ENCODE measurements at regions of chr2 and their contacts with region 1.

Region 1: DNA sequence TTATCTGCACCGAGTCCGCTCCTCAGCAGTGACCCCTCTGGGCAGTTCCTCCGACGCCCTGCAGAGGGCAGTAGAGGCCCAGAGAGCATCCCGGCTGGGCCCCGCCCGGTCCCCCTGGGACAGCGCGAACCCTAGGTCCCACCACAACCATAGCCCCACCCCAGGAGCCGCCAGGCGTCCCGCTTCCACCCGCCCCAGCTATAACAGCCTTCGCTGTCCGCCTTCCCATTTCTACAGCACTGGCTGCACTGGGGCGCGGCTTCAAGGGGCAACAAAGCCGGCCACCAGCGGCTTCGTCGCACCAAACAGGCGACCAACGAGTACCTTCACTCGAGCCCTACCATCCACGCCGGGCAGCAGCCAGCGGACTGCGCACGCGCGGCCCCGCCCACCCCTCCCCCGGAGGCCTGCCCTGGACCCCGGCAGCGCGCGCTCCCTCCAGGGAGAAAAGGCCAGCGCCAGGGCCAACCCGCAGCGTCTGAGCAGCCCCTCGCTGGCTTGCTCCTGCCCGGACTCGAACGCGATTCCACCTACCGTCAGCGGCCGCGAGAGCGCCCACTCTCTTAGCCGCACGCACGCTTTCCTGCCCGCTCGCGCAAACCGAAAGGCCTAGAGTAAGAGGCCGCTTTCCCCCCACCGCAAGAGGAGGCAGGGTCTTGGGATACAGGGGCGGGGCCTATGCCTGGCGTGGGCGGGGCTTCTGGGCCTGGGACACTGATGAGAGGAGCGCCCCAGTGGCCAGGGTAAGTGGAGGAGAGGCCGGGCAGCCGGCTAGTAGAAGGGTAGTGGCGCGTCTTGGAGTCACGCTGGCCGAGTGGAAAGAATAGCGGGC is at the start of gene NHEJ1:
- DNase-seq: peak; percentile 90 to 97 (median 93)
- H3K4me3 ChIP-seq: peak within 1 kb of the TSS in 1 of 2 donors; percentile 70
- H3K4me3 Mint-ChIP-seq: peak within 1 kb of the TSS; percentile 89 to 98 (median 94)
- H3K27ac ChIP-seq: peak within 1 kb of the TSS; percentile 71
- H3K27ac Mint-ChIP-seq: peak within 1 kb of the TSS; percentile 88 to 99 (median 95)
- H3K4me1 ChIP-seq: peaks cover 12% of the 10 kb centered on the region
- H3K4me1 Mint-ChIP-seq: peaks cover 14 to 21% (median 18%) of the 10 kb centered on the region in 4 donors
- H3K27me3 ChIP-seq: no peaks in the 10 kb centered on the region
- H3K27me3 Mint-ChIP-seq: no peaks in the 10 kb centered on the region
- total RNA-seq, gene NHEJ1: 14.1 to 15.5 TPM

Region 2: DNA sequence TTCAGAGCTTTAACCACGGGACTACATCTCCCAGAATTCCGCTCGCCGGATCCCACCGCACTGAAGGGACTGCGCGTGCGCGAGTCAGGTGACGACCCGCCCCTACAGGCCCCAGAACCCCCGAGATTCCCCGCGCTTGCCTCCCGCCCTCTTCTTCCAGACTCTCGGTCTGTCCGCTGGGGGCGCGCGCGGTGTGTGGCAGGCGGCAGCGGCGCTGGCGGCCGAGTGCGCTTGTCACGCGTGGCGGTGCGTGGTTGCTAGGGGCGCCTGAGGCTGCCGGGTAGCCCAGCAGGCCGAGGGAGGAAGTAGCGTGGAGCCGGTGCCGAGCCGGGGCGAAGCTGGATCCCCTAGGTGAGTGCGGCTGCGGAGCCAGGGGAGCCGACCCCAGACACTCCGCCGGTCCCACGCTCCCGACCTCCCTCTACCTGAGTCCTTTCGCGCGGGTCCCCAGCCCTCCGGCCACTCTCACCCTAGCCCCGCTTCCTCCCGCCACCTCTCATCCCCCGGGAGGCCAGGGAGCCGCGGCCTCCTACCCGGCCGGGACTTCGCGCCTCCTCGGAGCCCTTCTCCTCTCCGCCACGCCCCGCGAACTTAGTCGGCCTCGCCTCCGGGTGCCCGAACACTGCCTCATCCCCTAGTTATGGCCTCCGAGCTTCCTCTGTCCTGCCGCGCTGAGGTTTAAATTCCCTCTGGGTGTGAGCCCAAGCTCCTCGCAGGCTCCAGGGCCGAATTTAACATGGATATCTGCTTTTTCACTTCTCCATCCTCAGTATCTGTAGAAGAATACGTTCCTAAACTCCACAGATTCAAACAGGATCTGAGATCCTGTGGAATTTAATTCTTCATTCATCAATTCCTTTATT is 449.5 kb before region 1 on chr2 and contains the start of gene TTLL4:
- CTCF ChIA-PET with region 1: no interaction called
- POLR2A ChIA-PET with region 1: no interaction called
- intact Hi-C with region 1: loop called (anchors 5 kb)
- DNase-seq: peak; percentile 98 to 99 (median 99)
- H3K4me3 ChIP-seq: peak within 1 kb of the TSS; percentile 55 to 78
- H3K4me3 Mint-ChIP-seq: peak within 1 kb of the TSS; percentile 88 to 98 (median 95)
- H3K27ac ChIP-seq: peak within 1 kb of the TSS; percentile 81
- H3K27ac Mint-ChIP-seq: peak within 1 kb of the TSS; percentile 79 to 96 (median 93)
- H3K4me1 ChIP-seq: peaks cover 16% of the 10 kb centered on the region
- H3K4me1 Mint-ChIP-seq: peaks cover 14 to 26% (median 18%) of the 10 kb centered on the region in 4 donors
- H3K27me3 ChIP-seq: no peaks in the 10 kb centered on the region
- H3K27me3 Mint-ChIP-seq: peaks cover 0 to under 1% of the 10 kb centered on the region in 2 donors
- total RNA-seq, gene TTLL4: 23.1 to 26.1 TPM

Region 3: DNA sequence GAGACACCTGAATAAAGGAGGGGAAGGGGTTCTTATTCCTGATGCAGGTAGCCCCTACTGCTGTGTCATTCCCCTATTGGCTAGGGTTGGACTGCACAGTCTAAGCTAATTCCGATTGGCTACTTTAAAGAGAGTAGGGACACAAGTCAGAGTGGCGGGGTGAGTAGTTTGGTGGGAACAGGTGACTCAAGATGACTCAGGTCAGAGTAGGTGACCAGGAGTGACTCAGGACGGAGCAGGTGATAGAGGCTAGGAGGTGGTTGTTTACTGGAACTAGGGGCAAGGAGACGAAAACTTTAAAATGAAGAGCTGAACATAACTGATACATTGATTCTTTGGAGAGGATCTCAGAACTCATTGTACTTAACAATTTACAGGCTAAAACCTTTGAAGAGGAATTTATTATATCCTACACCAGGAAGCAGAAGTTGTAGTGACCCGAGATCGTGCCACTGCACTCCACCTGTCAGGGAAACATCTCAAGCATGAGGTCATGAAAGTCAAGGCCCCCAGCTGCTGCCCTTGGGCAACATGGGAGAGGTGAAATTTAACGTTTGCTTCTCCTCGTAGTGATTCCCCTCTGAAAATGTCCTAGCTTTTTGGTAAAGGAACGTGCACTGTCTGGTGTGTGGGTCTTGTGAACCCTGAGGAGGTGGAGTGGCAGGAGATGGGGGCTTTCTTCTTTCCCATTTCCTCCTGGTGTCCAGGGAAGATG is 383.0 kb before region 1 on chr2:
- CTCF ChIA-PET with region 1: no interaction called
- POLR2A ChIA-PET with region 1: no interaction called
- intact Hi-C with region 1: no loop called
- DNase-seq: no peak
- H3K4me3 ChIP-seq: no peak overlapping the region
- H3K4me3 Mint-ChIP-seq: no peak overlapping the region
- H3K27ac ChIP-seq: no peak overlapping the region
- H3K27ac Mint-ChIP-seq: no peak overlapping the region
- H3K4me1 ChIP-seq: peaks cover 5% of the 10 kb centered on the region
- H3K4me1 Mint-ChIP-seq: peaks cover 2 to 8% (median 6%) of the 10 kb centered on the region in 4 donors
- H3K27me3 ChIP-seq: peaks cover 17% of the 10 kb centered on the region
- H3K27me3 Mint-ChIP-seq: peaks cover 21 to 22% of the 10 kb centered on the region in 2 donors

Region 4: DNA sequence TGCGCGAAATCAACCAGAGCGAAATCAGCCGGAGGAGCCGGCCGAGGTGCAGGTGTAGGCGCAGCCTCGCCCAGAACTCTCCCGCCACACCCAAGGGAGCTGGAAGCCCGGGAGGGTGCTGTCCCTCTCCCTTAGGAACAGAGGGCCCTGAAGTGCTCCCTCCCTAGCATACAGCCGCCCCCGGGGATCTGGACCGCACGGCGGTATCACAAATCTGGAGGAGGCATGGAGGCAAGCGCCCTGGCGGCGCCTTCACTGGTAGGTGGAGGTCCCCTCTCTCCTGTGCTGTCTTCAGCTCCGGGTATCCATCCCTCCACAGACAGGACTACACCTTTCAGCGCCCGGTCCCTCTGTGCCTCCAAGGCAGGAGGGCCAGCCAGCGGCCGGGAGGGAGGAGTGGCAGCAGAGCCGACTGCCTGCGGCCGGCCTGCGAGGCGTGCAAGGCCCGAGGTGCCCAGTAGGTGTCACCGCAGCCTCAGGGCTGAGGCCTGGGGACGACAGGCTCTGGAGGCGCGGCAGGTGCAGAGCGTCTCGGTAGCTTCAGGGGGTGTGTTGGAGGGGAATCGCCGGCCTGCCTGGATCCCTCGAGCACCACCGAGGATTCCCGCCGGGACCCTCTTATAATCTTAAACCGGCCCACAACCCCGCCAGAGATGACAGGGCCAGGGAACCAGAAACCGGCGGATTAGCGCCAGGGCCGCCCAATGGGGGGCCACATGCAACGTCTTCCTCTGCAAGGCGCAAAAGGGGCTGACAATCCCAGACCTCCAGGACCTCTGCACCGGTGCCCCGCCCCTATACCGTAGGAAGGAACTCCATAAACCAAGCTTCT is 102.5 kb before region 1 on chr2:
- CTCF ChIA-PET with region 1: interaction called, 125 read pairs
- POLR2A ChIA-PET with region 1: interaction called, 3 read pairs
- intact Hi-C with region 1: loop called (anchors 1 kb)
- DNase-seq: peak; percentile 68 to 75 (median 70)
- H3K4me3 ChIP-seq: peak overlapping the region in 1 of 2 donors; percentile 24
- H3K4me3 Mint-ChIP-seq: peak overlapping the region in 7 of 8 donors; percentile 20 to 74 (median 65)
- H3K27ac ChIP-seq: no peak overlapping the region
- H3K27ac Mint-ChIP-seq: peak overlapping the region in 1 of 7 donors; percentile 30
- H3K4me1 ChIP-seq: peaks cover 35% of the 10 kb centered on the region
- H3K4me1 Mint-ChIP-seq: peaks cover 6 to 40% (median 20%) of the 10 kb centered on the region in 4 donors
- H3K27me3 ChIP-seq: peaks cover 40% of the 10 kb centered on the region
- H3K27me3 Mint-ChIP-seq: peaks cover 33 to 45% of the 10 kb centered on the region in 2 donors

Region 5: GRCh38 chr2:219206442-219207253 is 46.2 kb after region 1 on chr2 and contains the start of gene ZFAND2B:
- CTCF ChIA-PET with region 1: interaction called, 186 read pairs
- POLR2A ChIA-PET with region 1: interaction called, 26 read pairs
- intact Hi-C with region 1: loop called (anchors 1 kb)
- DNase-seq: peak; percentile 93 to 98 (median 95)
- H3K4me3 ChIP-seq: peak within 1 kb of the TSS; percentile 67 to 88
- H3K4me3 Mint-ChIP-seq: peak within 1 kb of the TSS; percentile 88 to 95 (median 94)
- H3K27ac ChIP-seq: peak within 1 kb of the TSS; percentile 87
- H3K27ac Mint-ChIP-seq: peak within 1 kb of the TSS; percentile 93 to 98 (median 97)
- H3K4me1 ChIP-seq: peaks cover 39% of the 10 kb centered on the region
- H3K4me1 Mint-ChIP-seq: peaks cover 22 to 54% (median 37%) of the 10 kb centered on the region in 4 donors
- H3K27me3 ChIP-seq: no peaks in the 10 kb centered on the region
- H3K27me3 Mint-ChIP-seq: no peaks in the 10 kb centered on the region
- total RNA-seq, gene ZFAND2B: 73.3 to 79.8 TPM

Region 6: GRCh38 chr2:219245148-219245898 is 84.9 kb after region 1 on chr2 and contains the starts of genes GLB1L and STK16:
- CTCF ChIA-PET with region 1: interaction called, 11 read pairs
- POLR2A ChIA-PET with region 1: interaction called, 3 read pairs
- intact Hi-C with region 1: no loop called
- DNase-seq: peak; percentile 85 to 88 (median 86)
- H3K4me3 ChIP-seq: peak within 1 kb of the TSS; percentile 45 to 97
- H3K4me3 Mint-ChIP-seq: peak within 1 kb of the TSS; percentile 85 to 99 (median 94)
- H3K27ac ChIP-seq: peak within 1 kb of the TSS; percentile 94
- H3K27ac Mint-ChIP-seq: peak within 1 kb of the TSS; percentile 96 to 99 (median 99)
- H3K4me1 ChIP-seq: peaks cover 59% of the 10 kb centered on the region
- H3K4me1 Mint-ChIP-seq: peaks cover 39 to 80% (median 56%) of the 10 kb centered on the region in 4 donors
- H3K27me3 ChIP-seq: no peaks in the 10 kb centered on the region
- H3K27me3 Mint-ChIP-seq: no peaks in the 10 kb centered on the region
- total RNA-seq, gene GLB1L: 1.5 to 2.5 TPM
- total RNA-seq, gene STK16: 19.3 to 21.1 TPM

Region 7: GRCh38 chr2:219294356-219295351 is 134.3 kb after region 1 on chr2:
- CTCF ChIA-PET with region 1: interaction called, 79 read pairs
- POLR2A ChIA-PET with region 1: interaction called, 21 read pairs
- intact Hi-C with region 1: loop called (anchors 1 kb)
- DNase-seq: peak; percentile 84 to 91 (median 88)
- H3K4me3 ChIP-seq: peak overlapping the region; percentile 11 to 17
- H3K4me3 Mint-ChIP-seq: peak overlapping the region; percentile 59 to 84 (median 78)
- H3K27ac ChIP-seq: peak overlapping the region; percentile 33
- H3K27ac Mint-ChIP-seq: peak overlapping the region; percentile 70 to 94 (median 88)
- H3K4me1 ChIP-seq: peaks cover 12% of the 10 kb centered on the region
- H3K4me1 Mint-ChIP-seq: peaks cover 6 to 21% (median 11%) of the 10 kb centered on the region in 4 donors
- H3K27me3 ChIP-seq: no peaks in the 10 kb centered on the region
- H3K27me3 Mint-ChIP-seq: peaks cover 4 to 6% of the 10 kb centered on the region in 2 donors